ENCODE measurements at regions of chr2 and their contacts with region 1.

Region 1: DNA sequence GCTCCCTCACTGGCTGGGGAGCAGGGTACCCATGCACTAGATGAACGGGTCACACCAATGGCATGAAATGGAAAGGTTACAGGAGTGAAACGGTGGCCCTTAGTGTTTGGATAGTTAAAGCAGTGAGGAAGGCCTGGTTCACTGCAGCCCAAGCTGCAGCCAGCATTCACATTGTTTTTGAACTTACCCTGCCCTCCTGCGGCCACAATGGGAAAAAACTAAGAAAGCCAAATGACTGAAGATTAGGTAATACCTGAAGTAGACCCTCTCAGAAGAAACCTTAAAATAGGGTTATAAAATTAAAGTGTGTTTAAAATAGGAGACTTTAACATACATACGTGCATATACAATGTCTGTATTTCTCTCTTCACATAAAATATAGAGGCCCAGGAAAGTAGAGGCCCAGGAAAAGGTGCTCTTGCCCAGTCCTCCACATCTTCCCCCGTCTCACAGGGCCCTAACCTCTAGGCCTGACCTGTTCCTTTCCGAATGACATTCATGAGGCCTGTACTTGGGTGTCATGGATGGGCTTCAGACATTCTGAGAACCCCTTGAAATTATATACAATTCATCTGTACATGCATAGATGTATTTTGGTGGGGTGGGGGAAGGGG is 33.3 kb downstream of the DOK1 start:
- DNase-seq: peak; percentile 66 to 68
- H3K4me3 ChIP-seq: no peak overlapping the region
- H3K27ac ChIP-seq: no peak overlapping the region
- H3K4me1 ChIP-seq: no peaks in the 10 kb centered on the region
- H3K27me3 ChIP-seq: peaks cover 0 to 2% of the 10 kb centered on the region in 2 donors
- CTCF ChIP-seq: peak; percentile 71 to 79 (median 72)
- POLR2A ChIP-seq: no peak

Region 2: DNA sequence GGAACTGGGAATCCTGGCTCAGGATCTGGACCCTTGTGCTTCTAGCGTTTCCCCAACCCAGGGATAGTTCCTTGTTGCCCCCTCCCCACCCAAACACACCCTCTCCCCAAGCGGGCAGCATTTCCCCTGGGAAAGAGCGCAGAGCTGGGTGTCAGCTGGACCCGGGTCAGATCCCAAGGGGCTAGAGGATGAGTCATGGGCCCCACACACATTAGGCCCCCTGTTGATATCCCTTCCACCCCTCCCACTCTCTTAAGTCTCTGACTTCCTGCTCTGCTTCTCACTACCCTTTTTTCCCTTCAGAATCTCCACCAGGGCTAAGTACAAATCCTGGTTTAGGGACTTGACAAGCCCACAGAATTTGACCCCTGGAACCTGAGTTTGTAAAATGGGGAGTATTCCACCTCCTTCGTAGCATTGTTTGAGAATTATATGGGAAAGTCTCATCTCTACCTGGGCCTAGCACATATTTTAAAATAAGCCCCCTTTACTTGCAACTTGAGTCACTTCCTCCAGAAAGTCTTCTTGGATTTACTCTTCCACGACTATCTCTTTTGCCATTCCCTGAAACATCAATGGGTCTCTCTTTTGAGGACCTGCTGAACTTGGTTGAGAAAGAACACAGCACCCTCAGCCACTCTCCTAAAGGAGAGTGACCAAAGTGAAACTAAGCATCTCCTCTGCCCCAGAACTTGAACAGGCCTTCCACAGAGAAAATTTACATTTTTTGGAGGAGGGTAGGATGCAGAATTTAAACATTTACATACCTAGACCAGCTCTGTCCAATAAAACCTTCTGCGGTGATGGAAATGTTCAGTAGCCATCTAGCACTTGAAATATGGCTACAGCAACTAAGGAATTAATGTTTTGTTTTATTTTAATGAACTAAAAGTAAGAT is 150.7 kb before region 1 on chr2:
- intact Hi-C with region 1: no loop called
- DNase-seq: no peak
- H3K4me3 ChIP-seq: no peak overlapping the region
- H3K27ac ChIP-seq: no peak overlapping the region
- H3K4me1 ChIP-seq: peaks cover 0 to 9% of the 10 kb centered on the region in 2 donors
- H3K27me3 ChIP-seq: peaks cover 0 to 5% of the 10 kb centered on the region in 2 donors
- CTCF ChIP-seq: no peak
- POLR2A ChIP-seq: no peak

Region 3: GRCh38 chr2:74482801-74483674 is 104.7 kb before region 1 on chr2 and contains the starts of genes CCDC142 and TTC31:
- intact Hi-C with region 1: loop called (anchors 2 kb)
- DNase-seq: peak; percentile 95 to 98
- H3K4me3 ChIP-seq: peak within 1 kb of the TSS; percentile 91 to 93
- H3K27ac ChIP-seq: peak within 1 kb of the TSS; percentile 91 to 93
- H3K4me1 ChIP-seq: peaks cover 0 to 10% of the 10 kb centered on the region in 2 donors
- H3K27me3 ChIP-seq: no peaks in the 10 kb centered on the region
- CTCF ChIP-seq: peak; percentile 84 to 89 (median 87)
- POLR2A ChIP-seq: peak in 1 of 2 donors; percentile 29
- total RNA-seq, gene CCDC142: 10.9 to 42.8 (median 35.7) TPM
- total RNA-seq, gene TTC31: 8.5 to 29.2 (median 17.5) TPM

Measured in uterus (tissue), 4 donors.